ENCODE measurements at regions of chr10 and their contacts with region 1.

Region 1: DNA sequence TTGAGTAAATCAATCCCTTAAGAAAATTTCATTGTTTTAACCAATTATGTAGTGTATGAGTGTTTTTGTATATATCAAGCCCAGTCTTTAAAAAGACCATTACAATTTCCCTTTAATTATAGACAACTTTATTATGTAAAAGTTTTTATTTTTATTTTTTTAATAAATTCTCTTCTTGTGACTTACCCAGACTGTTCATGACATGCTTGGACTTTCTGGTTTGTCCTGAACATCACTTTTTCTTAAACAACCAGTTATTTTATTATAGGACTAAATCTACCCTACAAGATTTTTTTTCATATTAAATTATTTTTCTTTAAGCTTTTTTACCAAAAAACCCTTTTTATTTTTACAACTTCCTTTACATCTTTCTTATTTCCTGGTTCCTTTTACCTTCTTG is 410.4 kb downstream of the ATRNL1 start:
- DNase-seq: no peak

Region 2: GRCh38 chr10:114556236-114557122 is 947.1 kb before region 1 on chr10:
- intact Hi-C with region 1: loop called in 1 of 2 experiments (anchors 5 kb)
- DNase-seq: no peak

Measured in posterior vena cava (tissue), 2 donors.